ENCODE measurements at regions of chr17 and their contacts with region 1.

Region 1: DNA sequence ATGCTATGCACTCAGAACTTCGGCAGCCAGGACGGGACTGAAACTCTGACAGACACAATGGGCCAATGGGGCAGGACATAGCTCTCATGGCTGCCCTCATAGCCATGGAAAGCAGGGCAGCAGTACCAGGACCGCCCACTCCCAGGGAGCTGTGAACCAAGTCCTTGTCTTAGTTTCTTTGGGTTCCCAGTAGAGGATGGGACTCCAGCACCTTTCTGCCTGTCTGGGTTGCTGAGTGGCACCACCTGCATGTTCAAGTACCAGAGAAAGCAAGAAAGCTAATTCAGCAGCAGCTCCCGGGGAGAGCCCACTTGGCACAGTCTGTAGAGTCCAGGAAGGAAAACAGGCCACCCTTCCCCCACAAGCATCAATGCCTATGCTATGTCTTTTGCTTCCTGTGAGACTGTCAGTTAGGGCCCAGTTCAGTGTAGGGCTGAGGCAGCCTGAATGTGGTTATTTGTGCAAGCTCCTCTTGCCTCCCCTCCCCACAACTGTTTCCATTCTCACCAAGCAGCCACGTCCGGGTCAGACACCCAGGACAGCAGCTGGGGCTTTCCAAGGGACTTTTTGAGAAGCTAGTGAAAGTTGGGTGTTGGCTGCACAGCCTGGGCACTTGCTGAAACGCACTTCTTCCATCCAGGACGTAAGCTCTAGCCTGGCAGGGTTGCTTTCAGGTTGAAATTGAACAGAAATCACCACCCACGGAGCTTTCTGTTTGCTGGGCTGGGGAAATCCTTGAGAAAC is 7.8 kb downstream of the SUPT4H1 start:
- DNase-seq: peak; percentile 48 to 96 (median 80)
- ATAC-seq: peak; percentile 91
- H3K4me3 ChIP-seq: peak overlapping the region; percentile 64
- H3K4me3 Mint-ChIP-seq: peak overlapping the region; percentile 80 to 100 (median 88)
- H3K27ac ChIP-seq: peak overlapping the region; percentile 98
- H3K27ac Mint-ChIP-seq: peak overlapping the region; percentile 91 to 100 (median 95)
- H3K4me1 ChIP-seq: peaks cover 72 to 78% of the 10 kb centered on the region in 2 donors
- H3K4me1 Mint-ChIP-seq: peaks cover 54 to 100% (median 87%) of the 10 kb centered on the region in 7 donors
- H3K27me3 ChIP-seq: no peaks in the 10 kb centered on the region
- H3K27me3 Mint-ChIP-seq: no peaks in the 10 kb centered on the region

Region 2: GRCh38 chr17:58249270-58250133 is 94.7 kb before region 1 on chr17:
- CTCF ChIA-PET with region 1: interaction called, 3 read pairs
- POLR2A ChIA-PET with region 1: interaction called, 3 read pairs
- intact Hi-C with region 1: loop called in 1 of 2 experiments (anchors 1 kb)
- DNase-seq: peak; percentile 47 to 83 (median 74)
- ATAC-seq: peak; percentile 98
- H3K4me3 ChIP-seq: peak overlapping the region; percentile 65
- H3K4me3 Mint-ChIP-seq: peak overlapping the region; percentile 58 to 87 (median 81)
- H3K27ac ChIP-seq: no peak overlapping the region
- H3K27ac Mint-ChIP-seq: no peak overlapping the region
- H3K4me1 ChIP-seq: no peaks in the 10 kb centered on the region
- H3K4me1 Mint-ChIP-seq: peaks cover 0 to 21% (median 10%) of the 10 kb centered on the region in 7 donors
- H3K27me3 ChIP-seq: no peaks in the 10 kb centered on the region
- H3K27me3 Mint-ChIP-seq: peaks cover 3 to 50% (median 14%) of the 10 kb centered on the region in 5 donors

Region 3: DNA sequence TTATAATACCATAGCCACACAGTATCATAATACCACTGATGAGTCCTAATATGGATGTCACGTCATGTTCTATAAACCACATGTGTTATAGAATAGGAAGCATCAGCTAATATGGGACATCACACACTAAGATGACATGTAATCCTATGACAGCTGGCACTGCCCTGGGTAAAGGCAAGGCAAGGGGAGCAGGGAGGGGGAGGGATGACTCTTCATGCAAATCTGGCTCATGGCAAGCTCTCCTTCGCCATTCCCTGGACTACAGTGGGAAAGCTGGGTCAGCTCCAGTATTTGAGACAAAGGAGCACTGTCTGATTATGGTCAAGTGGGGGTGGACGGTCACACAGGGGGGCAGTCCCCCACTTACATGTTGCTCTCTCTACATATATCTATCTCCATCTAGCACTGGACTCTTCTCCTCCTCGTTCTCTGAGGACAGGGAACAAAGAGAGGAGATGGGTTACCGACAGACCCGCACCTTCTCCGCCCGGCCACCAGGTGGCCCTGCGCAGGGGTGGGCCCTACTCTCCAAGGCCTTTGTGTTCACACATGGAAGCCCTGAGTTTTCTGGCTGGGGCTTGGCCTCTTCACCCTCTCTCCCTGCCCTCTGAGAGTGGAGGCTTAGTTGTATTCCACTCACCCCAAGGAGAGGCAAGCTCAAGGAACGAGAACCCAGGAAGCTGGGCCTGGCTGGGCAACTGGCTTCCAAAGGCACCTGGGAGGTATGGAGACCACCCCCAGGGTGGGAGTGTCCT is 40.1 kb before region 1 on chr17:
- CTCF ChIA-PET with region 1: interaction called, 8 read pairs
- POLR2A ChIA-PET with region 1: interaction called, 19 read pairs
- intact Hi-C with region 1: loop called in 1 of 2 experiments (anchors 1 kb)
- DNase-seq: peak in 8 of 9 donors; percentile 32 to 63 (median 53)
- ATAC-seq: peak; percentile 89
- H3K4me3 ChIP-seq: no peak overlapping the region
- H3K4me3 Mint-ChIP-seq: peak overlapping the region in 1 of 10 donors; percentile 38
- H3K27ac ChIP-seq: no peak overlapping the region
- H3K27ac Mint-ChIP-seq: peak overlapping the region in 1 of 9 donors; percentile 46
- H3K4me1 ChIP-seq: peaks cover 0 to 6% of the 10 kb centered on the region in 2 donors
- H3K4me1 Mint-ChIP-seq: peaks cover 0 to 7% (median 4%) of the 10 kb centered on the region in 7 donors
- H3K27me3 ChIP-seq: no peaks in the 10 kb centered on the region
- H3K27me3 Mint-ChIP-seq: peaks cover 0 to 5% (median 0%) of the 10 kb centered on the region in 5 donors

Region 4: GRCh38 chr17:58329035-58329809 is 15.0 kb before region 1 on chr17:
- CTCF ChIA-PET with region 1: interaction called, 257 read pairs
- POLR2A ChIA-PET with region 1: interaction called, 792 read pairs
- intact Hi-C with region 1: loop called (anchors 1 kb)
- DNase-seq: peak in 8 of 9 donors; percentile 52 to 83 (median 62)
- ATAC-seq: peak; percentile 62
- H3K4me3 ChIP-seq: peak overlapping the region; percentile 64
- H3K4me3 Mint-ChIP-seq: peak overlapping the region; percentile 86 to 100 (median 94)
- H3K27ac ChIP-seq: peak overlapping the region; percentile 98
- H3K27ac Mint-ChIP-seq: peak overlapping the region; percentile 91 to 98 (median 94)
- H3K4me1 ChIP-seq: peaks cover 4 to 18% of the 10 kb centered on the region in 2 donors
- H3K4me1 Mint-ChIP-seq: peaks cover 37 to 61% (median 50%) of the 10 kb centered on the region in 7 donors
- H3K27me3 ChIP-seq: no peaks in the 10 kb centered on the region
- H3K27me3 Mint-ChIP-seq: peaks cover 0 to 19% (median 0%) of the 10 kb centered on the region in 5 donors